ENCODE measurements at regions of chr17 and their contacts with region 1.

Region 1: DNA sequence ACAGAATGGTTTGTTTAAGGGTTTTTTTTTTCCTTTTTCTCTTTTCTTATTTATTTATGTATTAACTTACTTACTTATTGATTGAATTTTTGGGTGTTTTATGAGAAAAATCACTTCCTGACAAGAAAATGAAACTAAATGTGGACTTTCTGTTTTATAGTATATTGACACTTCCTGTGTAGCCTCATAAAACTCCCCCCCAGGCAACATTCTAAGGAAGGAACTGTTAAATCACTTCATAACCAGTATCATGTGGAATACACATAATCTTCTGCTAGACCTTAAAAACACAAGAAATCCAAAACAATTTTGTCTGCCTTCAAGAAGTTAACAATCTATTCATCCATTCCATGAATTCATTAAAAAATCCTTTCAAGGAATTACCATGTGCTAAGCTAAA is 164.1 kb upstream of the TOM1L1 start:
- DNase-seq: no peak
- ATAC-seq: no peak
- H3K4me3 ChIP-seq: no peak overlapping the region
- H3K27ac ChIP-seq: no peak overlapping the region
- H3K4me1 ChIP-seq: no peaks in the 10 kb centered on the region
- H3K27me3 ChIP-seq: no peaks in the 10 kb centered on the region
- CTCF ChIP-seq: no peak
- POLR2A ChIP-seq: no peak

Region 2: DNA sequence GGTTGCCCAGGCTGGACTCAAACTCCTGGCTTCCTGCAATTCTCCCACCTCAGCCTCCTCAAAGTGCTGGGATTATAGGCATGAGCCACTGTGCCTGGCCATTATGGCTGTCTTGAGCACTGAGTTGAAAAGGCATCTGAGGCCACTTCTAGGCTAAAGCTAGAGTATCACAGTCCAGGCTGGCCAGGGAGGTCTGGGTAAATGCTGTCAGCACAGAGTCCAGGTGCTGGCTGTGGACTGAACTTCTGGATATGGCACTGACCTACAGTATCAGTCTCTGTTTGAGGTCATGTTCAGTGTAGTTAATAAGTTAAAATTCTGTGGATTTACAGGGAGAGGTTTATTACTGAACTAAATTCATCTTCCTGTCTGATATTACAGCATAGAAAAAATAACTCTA is 58.4 kb before region 1 on chr17:
- intact Hi-C with region 1: loop called in 1 of 10 experiments (anchors 10 kb)
- DNase-seq: no peak
- ATAC-seq: no peak
- H3K4me3 ChIP-seq: no peak overlapping the region
- H3K27ac ChIP-seq: no peak overlapping the region
- H3K4me1 ChIP-seq: no peaks in the 10 kb centered on the region
- H3K27me3 ChIP-seq: no peaks in the 10 kb centered on the region
- CTCF ChIP-seq: no peak
- POLR2A ChIP-seq: no peak

Measured in heart left ventricle (tissue), 16 donors.